Vagina (tissue), 2 donors: ENCODE measurements at regions of chr1 and their contacts with region 1.

Region 1: GRCh38 chr1:204041232-204041767 is 31.6 kb upstream of the SOX13 start:
- DNase-seq: no peak
- H3K4me3 ChIP-seq: no peak overlapping the region
- H3K27ac ChIP-seq: peak overlapping the region; percentile 81
- H3K4me1 ChIP-seq: peaks cover 20% of the 10 kb centered on the region
- H3K27me3 ChIP-seq: no peaks in the 10 kb centered on the region
- CTCF ChIP-seq: no peak
- POLR2A ChIP-seq: no peak

Region 2: GRCh38 chr1:203926025-203926540 is 115.2 kb before region 1 on chr1:
- intact Hi-C with region 1: loop called (anchors 10 kb)
- DNase-seq: no peak
- H3K4me3 ChIP-seq: no peak overlapping the region
- H3K27ac ChIP-seq: no peak overlapping the region
- H3K4me1 ChIP-seq: no peaks in the 10 kb centered on the region
- H3K27me3 ChIP-seq: no peaks in the 10 kb centered on the region
- CTCF ChIP-seq: no peak
- POLR2A ChIP-seq: no peak